Dorsolateral prefrontal cortex (tissue), 120 donors: ENCODE measurements at regions of chr15 and their contacts with region 1.

Region 1: GRCh38 chr15:27679731-27680471 is 419.2 kb downstream of the OCA2 start:
- DNase-seq: peak in 1 of 10 donors; percentile 48
- H3K4me3 ChIP-seq: peak overlapping the region in 6 of 59 donors; percentile 1 to 33 (median 16)
- H3K27ac ChIP-seq: peak overlapping the region in 1 of 59 donors; percentile 26
- H3K27me3 ChIP-seq: no peaks in the 10 kb centered on the region
- CTCF ChIP-seq: no peak

Region 2: GRCh38 chr15:27514526-27514925 is 165.4 kb before region 1 on chr15:
- intact Hi-C with region 1: no loop called
- DNase-seq: no peak
- H3K4me3 ChIP-seq: no peak overlapping the region
- H3K27ac ChIP-seq: no peak overlapping the region
- H3K27me3 ChIP-seq: no peaks in the 10 kb centered on the region
- CTCF ChIP-seq: no peak

Region 3: DNA sequence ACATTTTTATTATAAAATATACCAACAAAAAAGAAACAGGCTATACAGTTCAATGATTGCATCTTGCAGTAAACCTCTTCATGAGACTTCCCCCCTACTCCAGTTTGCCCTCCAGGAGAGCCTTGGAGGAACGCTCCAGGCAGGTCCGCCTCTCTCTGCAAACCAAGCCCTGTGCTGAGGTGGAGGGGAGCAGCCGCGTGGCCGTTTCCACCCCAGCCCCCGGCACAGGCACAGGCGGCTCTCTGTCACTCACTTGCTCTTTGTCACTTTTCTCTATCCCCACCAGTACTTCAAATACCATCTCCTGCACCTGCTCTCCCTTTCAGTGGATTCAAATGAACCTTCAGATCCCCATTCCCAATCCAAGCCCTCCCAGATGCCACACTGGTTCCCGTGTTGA is 60.7 kb before region 1 on chr15:
- intact Hi-C with region 1: loop called (anchors 10 kb)
- DNase-seq: no peak
- H3K4me3 ChIP-seq: no peak overlapping the region
- H3K27ac ChIP-seq: no peak overlapping the region
- H3K27me3 ChIP-seq: no peaks in the 10 kb centered on the region
- CTCF ChIP-seq: no peak

Region 4: GRCh38 chr15:27742751-27743477 is 63.0 kb after region 1 on chr15:
- intact Hi-C with region 1: loop called in 1 of 2 experiments (anchors 10 kb)
- DNase-seq: peak in 9 of 10 donors; percentile 37 to 83 (median 54)
- H3K4me3 ChIP-seq: no peak overlapping the region
- H3K27ac ChIP-seq: peak overlapping the region in 3 of 59 donors; percentile 9 to 48 (median 14)
- H3K27me3 ChIP-seq: no peaks in the 10 kb centered on the region
- CTCF ChIP-seq: peak in 1 of 56 donors; percentile 16

Region 5: DNA sequence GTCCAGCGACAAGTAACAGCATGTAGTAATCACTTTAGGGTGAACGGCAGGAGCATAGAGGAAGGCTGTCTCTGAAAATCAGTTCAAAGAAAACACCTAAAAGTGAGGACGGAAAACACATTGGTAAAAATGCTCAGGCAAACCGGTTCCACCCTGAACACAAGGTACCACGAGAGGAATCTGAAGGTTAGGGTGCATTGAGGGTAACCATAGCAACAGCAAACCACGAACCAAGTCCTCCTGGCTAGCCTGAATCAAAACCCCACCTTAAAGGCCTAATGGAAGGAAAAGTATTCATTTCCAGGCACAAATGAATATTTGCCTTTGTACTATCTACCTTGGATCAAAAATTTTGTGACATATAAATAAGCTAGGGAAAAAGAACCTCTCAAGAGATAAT is 104.2 kb after region 1 on chr15:
- intact Hi-C with region 1: no loop called
- DNase-seq: no peak
- H3K4me3 ChIP-seq: no peak overlapping the region
- H3K27ac ChIP-seq: no peak overlapping the region
- H3K27me3 ChIP-seq: peaks cover 0 to 4% (median 0%) of the 10 kb centered on the region in 45 donors
- CTCF ChIP-seq: no peak